ENCODE measurements at regions of chr17 and their contacts with region 1.

Region 1: GRCh38 chr17:62064791-62065563 is at the start of gene MED13:
- DNase-seq: peak; percentile 17 to 44 (median 25)
- H3K4me3 ChIP-seq: peak within 1 kb of the TSS; percentile 86 to 99 (median 98)
- H3K4me3 Mint-ChIP-seq: peak within 1 kb of the TSS; percentile 98 to 99
- H3K27ac ChIP-seq: peak within 1 kb of the TSS; percentile 97 to 98
- H3K27ac Mint-ChIP-seq: peak within 1 kb of the TSS; percentile 96 to 99 (median 99)
- H3K4me1 ChIP-seq: peaks cover 20 to 38% of the 10 kb centered on the region in 2 donors
- H3K4me1 Mint-ChIP-seq: peaks cover 32% of the 10 kb centered on the region
- H3K27me3 ChIP-seq: no peaks in the 10 kb centered on the region
- H3K27me3 Mint-ChIP-seq: peaks cover 0 to 2% (median 0%) of the 10 kb centered on the region in 3 donors
- CTCF ChIP-seq: no peak
- polyA plus RNA-seq, gene MED13: 2.1 to 32.0 (median 5.0) TPM

Region 2: DNA sequence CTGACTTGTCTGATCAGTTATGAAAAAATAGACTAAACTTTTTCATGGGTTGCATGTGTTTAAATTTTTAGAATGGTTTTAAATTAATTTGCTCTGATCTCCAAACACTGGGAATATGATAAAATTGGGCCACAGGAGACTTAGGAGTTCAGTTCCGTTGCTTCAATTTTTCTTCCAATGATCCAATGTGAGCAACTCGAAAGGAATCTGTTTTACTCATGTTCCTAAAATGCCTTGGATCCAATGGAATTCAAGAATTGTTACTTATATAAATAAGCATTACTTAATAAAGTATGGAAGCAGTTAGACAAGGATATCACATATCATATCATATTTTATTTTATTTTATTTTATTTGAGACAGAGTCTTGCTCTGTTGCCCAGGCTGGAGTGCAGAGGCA is 417.9 kb before region 1 on chr17:
- intact Hi-C with region 1: no loop called
- DNase-seq: no peak
- H3K4me3 ChIP-seq: no peak overlapping the region
- H3K4me3 Mint-ChIP-seq: no peak overlapping the region
- H3K27ac ChIP-seq: no peak overlapping the region
- H3K27ac Mint-ChIP-seq: no peak overlapping the region
- H3K4me1 ChIP-seq: no peaks in the 10 kb centered on the region
- H3K4me1 Mint-ChIP-seq: no peaks in the 10 kb centered on the region
- H3K27me3 ChIP-seq: no peaks in the 10 kb centered on the region
- H3K27me3 Mint-ChIP-seq: peaks cover 0 to 4% (median 3%) of the 10 kb centered on the region in 3 donors
- CTCF ChIP-seq: no peak

Region 3: GRCh38 chr17:62109378-62109902 is 44.5 kb after region 1 on chr17:
- intact Hi-C with region 1: no loop called
- DNase-seq: peak; percentile 6 to 28 (median 6)
- H3K4me3 ChIP-seq: no peak overlapping the region
- H3K4me3 Mint-ChIP-seq: no peak overlapping the region
- H3K27ac ChIP-seq: no peak overlapping the region
- H3K27ac Mint-ChIP-seq: peak overlapping the region in 2 of 7 donors; percentile 33 to 53
- H3K4me1 ChIP-seq: no peaks in the 10 kb centered on the region
- H3K4me1 Mint-ChIP-seq: no peaks in the 10 kb centered on the region
- H3K27me3 ChIP-seq: no peaks in the 10 kb centered on the region
- H3K27me3 Mint-ChIP-seq: peaks cover 2 to 8% (median 4%) of the 10 kb centered on the region in 3 donors
- CTCF ChIP-seq: peak; percentile 31

Region 4: DNA sequence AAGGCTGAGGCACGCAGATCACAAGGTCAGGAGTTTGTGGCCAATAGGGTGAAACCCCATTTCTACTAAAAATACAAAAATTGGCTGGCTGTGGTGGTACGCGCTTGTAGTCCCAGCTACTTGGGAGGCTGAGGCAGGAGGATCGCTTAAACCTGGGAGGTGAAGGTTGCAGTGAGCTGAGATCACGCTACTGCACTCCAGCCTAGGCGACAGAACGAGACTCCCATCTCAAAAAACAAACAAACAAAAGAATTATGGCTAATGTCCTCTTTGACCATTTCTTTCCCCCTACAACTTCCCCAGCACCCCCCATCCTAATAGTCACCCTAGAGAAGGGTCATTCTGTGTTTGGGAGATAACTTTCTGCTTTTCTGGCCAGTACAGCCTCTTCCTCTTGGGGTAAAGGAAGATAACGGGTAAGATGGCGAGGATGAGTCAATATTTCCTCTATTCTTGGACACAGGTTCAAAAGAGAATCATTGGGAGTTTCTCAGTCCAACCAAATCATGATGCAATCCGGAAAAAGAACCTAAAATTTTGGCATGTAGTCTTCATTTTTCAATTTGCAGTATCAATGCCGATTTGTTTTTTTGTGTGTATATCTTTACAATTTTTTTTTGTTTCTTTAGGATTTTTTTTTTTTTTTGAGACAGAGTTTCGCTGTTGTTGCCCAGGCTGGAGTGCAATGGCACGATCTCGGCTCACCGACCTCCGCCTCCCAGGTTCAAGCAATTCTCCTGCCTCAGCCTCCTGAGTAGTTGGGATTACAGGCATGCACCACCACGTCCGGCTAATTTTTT is 107.7 kb after region 1 on chr17:
- intact Hi-C with region 1: loop called in 1 of 2 experiments (anchors 5 kb)
- DNase-seq: peak; percentile 51 to 91 (median 65)
- H3K4me3 ChIP-seq: no peak overlapping the region
- H3K4me3 Mint-ChIP-seq: no peak overlapping the region
- H3K27ac ChIP-seq: peak overlapping the region; percentile 37 to 42
- H3K27ac Mint-ChIP-seq: peak overlapping the region in 6 of 7 donors; percentile 81 to 99 (median 89)
- H3K4me1 ChIP-seq: peaks cover 33 to 34% of the 10 kb centered on the region in 2 donors
- H3K4me1 Mint-ChIP-seq: peaks cover 31% of the 10 kb centered on the region
- H3K27me3 ChIP-seq: no peaks in the 10 kb centered on the region
- H3K27me3 Mint-ChIP-seq: peaks cover 0 to 4% (median 0%) of the 10 kb centered on the region in 3 donors
- CTCF ChIP-seq: no peak